ENCODE measurements at regions of chr15 and their contacts with region 1.

Region 1: GRCh38 chr15:98311566-98312188 is 336.7 kb upstream of the IGF1R start:
- DNase-seq: peak; percentile 79
- H3K4me3 Mint-ChIP-seq: no peak overlapping the region
- H3K27ac Mint-ChIP-seq: no peak overlapping the region
- H3K4me1 Mint-ChIP-seq: peaks cover 5% of the 10 kb centered on the region
- H3K27me3 Mint-ChIP-seq: peaks cover 32% of the 10 kb centered on the region
- CTCF ChIP-seq: peak; percentile 63

Region 2: GRCh38 chr15:97124790-97125189 is 1186.9 kb before region 1 on chr15:
- CTCF ChIA-PET with region 1: no interaction called
- POLR2A ChIA-PET with region 1: no interaction called
- intact Hi-C with region 1: no loop called
- DNase-seq: no peak
- H3K4me3 Mint-ChIP-seq: no peak overlapping the region
- H3K27ac Mint-ChIP-seq: no peak overlapping the region
- H3K4me1 Mint-ChIP-seq: no peaks in the 10 kb centered on the region
- H3K27me3 Mint-ChIP-seq: no peaks in the 10 kb centered on the region
- CTCF ChIP-seq: no peak

Region 3: GRCh38 chr15:98321896-98322295 is 10.2 kb after region 1 on chr15:
- CTCF ChIA-PET with region 1: interaction called, 13 read pairs
- POLR2A ChIA-PET with region 1: interaction called, 3 read pairs
- intact Hi-C with region 1: no loop called
- DNase-seq: peak; percentile 77
- H3K4me3 Mint-ChIP-seq: peak overlapping the region; percentile 12
- H3K27ac Mint-ChIP-seq: peak overlapping the region; percentile 80
- H3K4me1 Mint-ChIP-seq: peaks cover 10% of the 10 kb centered on the region
- H3K27me3 Mint-ChIP-seq: no peaks in the 10 kb centered on the region
- CTCF ChIP-seq: no peak

Region 4: GRCh38 chr15:98330692-98331435 is 19.2 kb after region 1 on chr15:
- CTCF ChIA-PET with region 1: interaction called, 13 read pairs
- POLR2A ChIA-PET with region 1: interaction called, 3 read pairs
- intact Hi-C with region 1: no loop called
- DNase-seq: no peak
- H3K4me3 Mint-ChIP-seq: no peak overlapping the region
- H3K27ac Mint-ChIP-seq: no peak overlapping the region
- H3K4me1 Mint-ChIP-seq: no peaks in the 10 kb centered on the region
- H3K27me3 Mint-ChIP-seq: peaks cover 36% of the 10 kb centered on the region
- CTCF ChIP-seq: no peak

Region 5: GRCh38 chr15:98548154-98548971 is 236.7 kb after region 1 on chr15:
- CTCF ChIA-PET with region 1: no interaction called
- POLR2A ChIA-PET with region 1: no interaction called
- intact Hi-C with region 1: no loop called
- DNase-seq: peak; percentile 53
- H3K4me3 Mint-ChIP-seq: peak overlapping the region; percentile 78
- H3K27ac Mint-ChIP-seq: peak overlapping the region; percentile 25
- H3K4me1 Mint-ChIP-seq: peaks cover 5% of the 10 kb centered on the region
- H3K27me3 Mint-ChIP-seq: peaks cover 27% of the 10 kb centered on the region
- CTCF ChIP-seq: no peak

Measured in MCF 10A (cell line).